ENCODE measurements at regions of chrX and their contacts with region 1.

Region 1: DNA sequence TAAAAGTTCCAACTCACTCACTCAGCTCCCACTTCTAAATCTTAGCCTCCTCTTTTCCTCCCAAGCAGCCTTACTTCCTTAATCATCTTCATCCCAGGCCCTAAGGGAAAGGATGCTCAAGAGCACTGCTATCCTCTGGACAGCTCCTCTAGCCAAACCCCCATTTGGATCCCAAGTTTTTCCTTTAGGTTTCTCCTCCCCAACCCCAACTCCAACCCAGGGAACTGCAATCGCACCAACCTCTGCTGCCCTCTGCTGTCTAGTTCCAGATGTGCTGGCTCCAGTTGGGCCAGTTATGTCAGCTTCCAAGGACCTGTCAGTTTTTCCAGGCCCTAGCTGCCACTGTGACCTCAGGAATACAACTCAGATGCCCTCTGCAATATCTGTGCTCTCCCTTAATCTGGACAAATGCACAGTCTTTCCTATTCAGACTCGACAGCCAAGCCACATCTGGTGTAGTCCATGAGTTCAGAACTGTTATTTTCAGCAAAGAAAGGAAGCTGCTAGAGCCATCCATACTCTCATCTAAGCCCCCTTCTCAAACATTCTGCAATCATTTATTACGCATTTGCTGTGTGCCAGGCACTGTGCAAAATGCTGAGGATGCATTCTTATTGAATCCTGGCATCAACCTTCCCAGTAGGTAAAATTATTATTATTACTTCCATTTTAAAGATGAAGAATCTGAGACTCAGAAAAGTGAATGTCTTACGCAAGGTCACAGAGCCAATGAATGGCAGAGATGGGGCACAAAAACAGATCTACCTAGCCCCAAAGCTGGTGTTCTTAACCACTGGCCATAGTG is 12.3 kb upstream of the XPNPEP2 start:
- DNase-seq: peak; percentile 42 to 59
- H3K4me3 ChIP-seq: no peak overlapping the region
- H3K27ac ChIP-seq: no peak overlapping the region
- H3K4me1 ChIP-seq: no peaks in the 10 kb centered on the region
- H3K27me3 ChIP-seq: no peaks in the 10 kb centered on the region
- CTCF ChIP-seq: peak; percentile 49 to 69 (median 60)
- POLR2A ChIP-seq: no peak

Region 2: DNA sequence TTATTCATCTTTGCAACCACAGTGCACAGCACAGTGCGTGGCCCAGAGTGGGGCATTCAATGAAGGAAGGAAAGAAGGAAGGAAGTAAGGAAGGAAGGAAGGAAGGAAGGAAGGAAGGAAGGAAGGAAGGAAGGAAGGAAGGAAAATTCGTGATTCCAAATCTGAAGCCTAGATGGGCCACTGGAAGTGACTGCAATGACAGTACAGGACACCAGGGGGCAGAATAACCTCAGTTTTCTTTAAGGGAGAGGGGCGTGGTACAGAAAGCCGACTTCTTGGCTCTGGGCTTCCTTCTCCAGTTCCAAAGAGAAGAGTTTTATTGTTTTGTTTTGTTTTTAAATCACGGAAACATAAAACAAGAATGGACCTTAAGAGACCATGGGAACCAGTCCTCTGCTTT is 119.6 kb before region 1 on chrX:
- intact Hi-C with region 1: loop called (anchors 10 kb)
- DNase-seq: peak; percentile 57 to 72
- H3K4me3 ChIP-seq: no peak overlapping the region
- H3K27ac ChIP-seq: no peak overlapping the region
- H3K4me1 ChIP-seq: no peaks in the 10 kb centered on the region
- H3K27me3 ChIP-seq: no peaks in the 10 kb centered on the region
- CTCF ChIP-seq: peak; percentile 67 to 83 (median 78)
- POLR2A ChIP-seq: no peak

Region 3: GRCh38 chrX:129637217-129638109 is 89.0 kb before region 1 on chrX:
- intact Hi-C with region 1: loop called (anchors 10 kb)
- DNase-seq: peak; percentile 69 to 71
- H3K4me3 ChIP-seq: no peak overlapping the region
- H3K27ac ChIP-seq: no peak overlapping the region
- H3K4me1 ChIP-seq: no peaks in the 10 kb centered on the region
- H3K27me3 ChIP-seq: no peaks in the 10 kb centered on the region
- CTCF ChIP-seq: peak; percentile 72 to 82 (median 73)
- POLR2A ChIP-seq: no peak

Region 4: DNA sequence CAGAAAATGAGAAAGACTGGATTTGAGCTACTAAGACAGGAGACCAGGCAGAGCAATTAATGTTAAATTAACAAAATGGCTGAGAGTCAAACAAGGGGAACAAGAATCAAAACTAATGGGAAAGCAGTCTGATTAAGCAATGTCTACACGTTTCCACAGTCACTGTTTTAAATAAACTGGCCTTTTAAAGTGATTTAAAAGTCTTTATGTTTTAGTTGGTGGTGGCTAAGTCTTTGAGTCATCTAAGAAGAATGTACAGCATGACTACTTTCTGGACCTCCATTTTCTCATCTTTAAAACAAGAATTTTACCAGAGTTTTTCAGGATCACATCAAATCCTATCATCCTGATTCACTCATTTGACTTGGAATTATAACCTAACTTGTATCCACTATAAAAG is 942.7 kb after region 1 on chrX:
- intact Hi-C with region 1: no loop called
- DNase-seq: no peak
- H3K4me3 ChIP-seq: no peak overlapping the region
- H3K27ac ChIP-seq: no peak overlapping the region
- H3K4me1 ChIP-seq: no peaks in the 10 kb centered on the region
- H3K27me3 ChIP-seq: no peaks in the 10 kb centered on the region
- CTCF ChIP-seq: no peak
- POLR2A ChIP-seq: no peak

Measured in uterus (tissue), 4 donors.